ENCODE measurements at regions of chr10 and their contacts with region 1.

Region 1: DNA sequence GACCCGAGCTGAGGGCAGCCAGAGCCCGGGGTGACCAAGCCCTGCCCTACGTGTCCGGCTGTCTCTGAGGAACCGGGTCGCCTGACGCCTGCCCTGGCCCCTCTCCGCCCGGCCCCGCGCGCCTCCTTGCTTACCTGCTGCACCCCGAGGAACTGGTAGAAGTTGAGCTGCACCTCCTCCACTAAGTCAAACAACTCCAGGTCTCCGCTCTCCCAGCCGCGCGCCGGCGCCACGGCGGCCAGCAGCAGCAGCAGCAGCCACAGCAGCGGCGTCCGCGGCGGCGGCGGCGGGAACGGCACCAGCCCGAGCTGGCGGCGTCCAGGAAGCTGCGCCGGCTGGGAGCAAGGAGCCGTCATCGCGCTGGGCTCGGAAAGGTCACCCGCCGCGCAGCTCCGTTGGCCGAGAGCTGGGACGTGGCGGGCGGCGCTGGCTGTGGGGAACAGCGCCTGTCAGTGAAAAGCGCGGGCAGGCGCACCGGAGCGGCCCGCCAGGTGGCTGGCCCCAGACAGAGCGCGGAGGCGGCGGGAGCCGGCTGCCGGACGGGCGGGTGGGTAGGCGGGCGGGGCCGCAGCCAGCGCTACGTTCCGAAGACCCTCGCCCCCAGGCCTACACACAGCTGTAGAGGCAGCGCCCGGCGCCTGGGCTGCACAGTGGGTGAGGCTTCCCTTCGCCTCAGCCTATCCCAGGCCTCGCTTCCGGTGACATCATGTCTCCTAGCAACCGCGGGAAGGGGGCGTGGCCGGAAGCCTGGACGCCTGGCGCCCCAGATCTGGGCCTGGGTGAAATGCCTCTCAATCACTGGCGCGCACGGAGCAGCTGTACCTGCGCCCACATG is at the start of gene DNAJC1:
- DNase-seq: peak; percentile 97
- H3K4me3 Mint-ChIP-seq: peak within 1 kb of the TSS; percentile 98
- H3K27ac Mint-ChIP-seq: peak within 1 kb of the TSS; percentile 96
- H3K4me1 Mint-ChIP-seq: peaks cover 41% of the 10 kb centered on the region
- H3K27me3 Mint-ChIP-seq: peaks cover 14% of the 10 kb centered on the region
- total RNA-seq, gene DNAJC1: 24.8 and 26.2 TPM in 2 replicates

Region 2: DNA sequence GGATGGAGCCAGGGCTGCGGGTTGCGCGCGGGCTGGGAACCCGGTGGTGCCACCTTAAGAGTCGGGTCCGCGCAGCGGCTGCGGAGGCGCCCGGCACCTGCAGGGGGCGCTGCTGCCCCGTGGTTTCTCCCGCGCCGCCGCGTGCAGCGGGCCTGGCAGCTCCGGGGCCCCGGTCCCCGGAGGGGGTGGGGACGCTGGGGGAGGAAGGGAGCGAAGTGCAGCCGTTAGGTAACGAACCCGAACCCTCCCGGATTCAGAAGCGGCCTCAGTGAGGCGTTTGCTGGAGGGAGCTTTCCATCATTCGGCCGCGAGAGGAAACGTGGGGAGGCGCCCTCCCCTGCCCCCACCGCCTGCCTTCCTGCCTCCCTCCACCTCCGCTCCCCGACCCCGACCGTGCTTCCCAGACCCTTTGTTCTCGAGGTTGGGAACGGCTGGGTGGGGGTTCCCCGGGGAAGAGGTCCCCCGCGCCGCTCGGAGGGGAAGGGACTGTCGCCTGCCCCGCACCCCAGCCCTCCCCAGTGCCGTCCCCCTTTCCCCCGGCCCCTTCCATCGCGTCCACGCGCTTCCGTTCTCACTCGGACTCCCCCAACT is 507.4 kb before region 1 on chr10:
- intact Hi-C with region 1: loop called (anchors 2 kb)
- DNase-seq: peak; percentile 82
- H3K4me3 Mint-ChIP-seq: peak overlapping the region; percentile 90
- H3K27ac Mint-ChIP-seq: no peak overlapping the region
- H3K4me1 Mint-ChIP-seq: peaks cover 20% of the 10 kb centered on the region
- H3K27me3 Mint-ChIP-seq: peaks cover 71% of the 10 kb centered on the region

Region 3: DNA sequence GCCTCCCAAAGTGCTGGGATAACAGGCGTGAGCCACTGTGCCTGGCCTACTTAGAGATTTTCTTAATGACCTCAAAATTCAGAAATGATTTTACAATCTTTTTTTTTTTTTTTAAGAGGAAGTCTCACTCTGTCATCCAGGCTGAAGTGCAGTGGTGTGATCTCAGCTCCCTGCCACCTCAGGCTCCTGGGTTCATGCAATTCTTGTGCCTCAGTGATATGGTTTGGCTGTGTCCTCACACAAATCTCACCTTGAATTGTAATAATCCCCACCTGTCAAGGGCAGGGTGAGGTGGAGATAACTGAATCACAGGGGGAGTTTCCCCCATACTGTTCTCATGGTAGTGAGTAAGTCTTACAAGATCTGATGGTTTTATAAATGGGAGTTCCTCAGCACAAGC is 159.7 kb before region 1 on chr10:
- intact Hi-C with region 1: no loop called
- DNase-seq: no peak
- H3K4me3 Mint-ChIP-seq: no peak overlapping the region
- H3K27ac Mint-ChIP-seq: no peak overlapping the region
- H3K4me1 Mint-ChIP-seq: no peaks in the 10 kb centered on the region
- H3K27me3 Mint-ChIP-seq: no peaks in the 10 kb centered on the region

Region 4: GRCh38 chr10:22228943-22229801 is 225.9 kb after region 1 on chr10:
- intact Hi-C with region 1: loop called (anchors 1 kb)
- DNase-seq: peak; percentile 77
- H3K4me3 Mint-ChIP-seq: peak overlapping the region; percentile 92
- H3K27ac Mint-ChIP-seq: peak overlapping the region; percentile 98
- H3K4me1 Mint-ChIP-seq: peaks cover 32% of the 10 kb centered on the region
- H3K27me3 Mint-ChIP-seq: peaks cover 11% of the 10 kb centered on the region

Region 5: DNA sequence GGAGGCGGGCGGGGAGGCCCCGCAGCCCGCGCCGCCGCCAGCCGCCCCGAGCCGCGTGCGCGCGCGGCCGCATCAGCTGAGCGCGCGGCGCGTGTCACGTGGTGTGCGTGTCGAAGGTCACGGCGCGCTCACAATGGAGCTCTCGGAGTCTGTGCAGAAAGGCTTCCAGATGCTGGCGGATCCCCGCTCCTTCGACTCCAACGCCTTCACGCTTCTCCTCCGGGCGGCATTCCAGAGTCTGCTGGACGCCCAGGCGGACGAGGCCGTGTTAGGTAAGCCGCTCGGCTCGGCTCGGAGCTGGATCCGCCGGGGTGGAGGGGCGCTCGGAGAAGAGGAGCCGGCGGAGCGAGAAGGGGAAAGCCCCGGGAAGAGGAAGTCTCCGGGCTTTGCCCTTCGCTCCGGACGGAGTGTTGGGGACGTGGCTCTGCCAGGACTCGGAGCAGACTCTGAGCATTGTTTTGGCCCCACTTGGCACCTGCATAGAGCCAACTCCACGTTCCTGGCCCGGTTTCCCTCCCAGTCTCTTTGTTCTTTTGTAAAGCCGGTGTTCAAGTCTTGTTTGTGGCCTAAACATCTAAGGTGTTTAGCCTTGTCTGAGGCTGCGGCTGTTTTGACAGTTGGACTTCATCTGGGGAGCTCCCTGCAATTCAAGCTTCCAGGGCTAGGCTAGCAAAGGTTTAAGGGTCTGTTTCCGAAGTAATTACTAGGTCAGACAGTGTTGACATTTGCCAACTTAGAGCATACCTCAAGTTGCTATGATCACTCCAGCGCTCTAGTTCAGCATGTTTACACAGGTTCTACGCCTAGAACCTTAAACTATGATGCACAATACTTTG is 313.2 kb after region 1 on chr10 and contains the start of gene COMMD3:
- intact Hi-C with region 1: loop called (anchors 2 kb)
- DNase-seq: peak; percentile 77
- H3K4me3 Mint-ChIP-seq: peak within 1 kb of the TSS; percentile 98
- H3K27ac Mint-ChIP-seq: peak within 1 kb of the TSS; percentile 100
- H3K4me1 Mint-ChIP-seq: peaks cover 50% of the 10 kb centered on the region
- H3K27me3 Mint-ChIP-seq: peaks cover 2% of the 10 kb centered on the region
- total RNA-seq, gene COMMD3: 78.7 and 84.4 TPM in 2 replicates

Region 6: GRCh38 chr10:22436884-22437619 is 433.8 kb after region 1 on chr10:
- intact Hi-C with region 1: loop called (anchors 1 kb)
- DNase-seq: peak; percentile 80
- H3K4me3 Mint-ChIP-seq: peak overlapping the region; percentile 91
- H3K27ac Mint-ChIP-seq: peak overlapping the region; percentile 96
- H3K4me1 Mint-ChIP-seq: peaks cover 49% of the 10 kb centered on the region
- H3K27me3 Mint-ChIP-seq: peaks cover 9% of the 10 kb centered on the region

Region 7: GRCh38 chr10:22682237-22683139 is 679.2 kb after region 1 on chr10:
- intact Hi-C with region 1: loop called (anchors 1 kb)
- DNase-seq: peak; percentile 63
- H3K4me3 Mint-ChIP-seq: peak overlapping the region; percentile 76
- H3K27ac Mint-ChIP-seq: peak overlapping the region; percentile 99
- H3K4me1 Mint-ChIP-seq: peaks cover 87% of the 10 kb centered on the region
- H3K27me3 Mint-ChIP-seq: no peaks in the 10 kb centered on the region

Measured in activated T-helper 1 cell treated with anti-CD3 and anti-CD28 coated beads, Interleukin-12 subunit alpha, Interleukin-12 subunit beta, Interleukin-2, Interleukin-4 antibody, amounts not matched to agents 30 ng/mL and 10 ng/mL and 1 ng/mL, durations not matched to agents 14 hours and 24 hours and 36 hours (primary cell).